K562 (cell line): ENCODE measurements at regions of chr12 and their contacts with region 1.

Region 1: DNA sequence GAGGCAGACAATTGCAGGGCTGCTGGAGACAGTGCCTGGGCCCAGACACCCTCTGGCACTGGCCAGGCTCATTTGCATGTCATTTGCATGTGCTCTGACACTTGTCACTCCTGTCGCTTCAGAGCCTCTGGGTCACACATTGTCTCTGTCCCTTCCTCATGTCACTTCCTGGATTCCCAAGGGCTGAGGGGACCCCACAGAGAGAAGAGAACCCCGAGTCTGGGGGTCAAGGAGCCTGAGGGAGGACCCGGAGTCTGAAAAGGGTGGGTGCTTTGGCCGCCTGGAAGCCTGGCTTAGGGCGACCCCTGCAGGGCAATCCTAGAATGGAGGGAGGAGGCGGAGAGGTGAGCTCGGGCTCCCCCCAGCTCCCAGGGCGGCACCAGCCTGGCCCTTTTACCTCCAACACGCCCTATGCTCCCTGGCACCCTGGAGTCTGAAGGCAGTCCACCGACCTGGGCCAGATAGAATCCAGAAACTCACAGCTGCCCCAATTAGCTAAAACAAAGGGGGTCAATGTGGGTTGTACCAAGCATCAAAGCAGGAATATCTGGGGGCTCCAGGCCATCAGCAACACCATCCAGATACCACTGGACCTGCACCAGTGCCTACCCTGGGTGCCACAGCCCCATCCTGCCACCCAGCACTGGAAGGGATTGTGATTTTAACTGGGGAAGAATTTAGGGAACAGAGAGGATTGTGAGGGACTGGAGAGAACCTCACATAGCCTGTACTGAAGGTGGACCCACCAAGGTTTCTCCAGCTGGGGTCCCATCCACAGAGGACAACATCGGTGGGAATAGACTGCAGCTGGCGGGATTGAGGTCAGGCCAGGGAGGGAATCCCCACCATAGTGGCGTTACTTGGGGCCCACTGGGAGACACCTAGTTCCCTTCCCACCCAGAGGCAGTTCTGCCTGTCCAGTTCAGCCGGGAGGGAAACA is 21.8 kb upstream of the KRT78 start:
- DNase-seq: peak; percentile 85 to 89 (median 87)
- ATAC-seq: peak; percentile 79
- H3K4me3 ChIP-seq: no peak overlapping the region
- H3K27ac ChIP-seq: no peak overlapping the region
- H3K4me1 ChIP-seq: peaks cover 25 to 36% of the 10 kb centered on the region in 2 experiments
- H3K27me3 ChIP-seq: no peaks in the 10 kb centered on the region
- CTCF ChIP-seq: peak; percentile 97 to 99 (median 99)
- EP300 ChIP-seq: no peak
- POLR2A ChIP-seq: no peak
- RAD21 ChIP-seq: peak; percentile 98 to 99

Region 2: DNA sequence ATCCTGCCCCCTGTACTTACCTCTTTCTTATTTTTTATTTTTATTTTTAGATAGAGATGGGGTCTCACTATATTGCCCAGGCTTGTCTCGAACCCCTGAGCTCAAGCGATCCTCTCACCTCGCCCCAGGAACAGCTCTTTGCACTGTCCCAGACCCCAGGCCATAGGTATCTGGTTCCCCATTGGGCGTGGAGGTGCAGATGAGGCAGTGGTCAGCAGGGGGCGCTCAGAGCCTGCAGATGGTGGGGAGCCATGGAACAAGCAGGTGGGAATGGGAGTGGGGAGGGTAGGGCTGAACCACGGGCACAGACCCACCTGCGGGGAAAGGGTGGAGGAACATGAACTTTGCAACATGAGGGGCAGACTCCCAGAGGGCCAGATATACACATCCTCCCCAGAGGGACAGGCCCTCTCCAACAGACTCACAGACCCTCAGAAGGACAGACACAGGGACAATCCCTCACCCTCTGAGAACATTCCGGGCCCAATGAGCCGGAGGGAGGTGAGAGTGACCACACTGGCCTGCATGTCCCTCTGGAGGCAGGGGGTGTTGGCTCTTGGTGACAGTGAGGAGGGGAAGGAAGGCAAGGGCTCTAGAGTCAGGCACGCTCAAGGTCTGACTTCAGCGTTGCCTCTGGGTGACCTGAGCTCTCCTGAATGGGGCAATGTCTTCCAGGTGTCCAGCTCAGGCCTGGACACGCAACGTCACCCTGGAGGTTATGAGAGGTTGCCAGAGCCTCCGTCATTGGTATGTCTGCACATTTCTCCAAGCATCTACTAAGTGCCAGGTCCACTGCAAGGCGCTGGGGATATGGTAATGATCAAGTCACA is 713.7 kb before region 1 on chr12:
- CTCF ChIA-PET with region 1: interaction called, 4 read pairs
- POLR2A ChIA-PET with region 1: no interaction called
- in situ Hi-C with region 1: no loop called
- intact Hi-C with region 1: loop called (anchors 5 kb)
- DNase-seq: peak; percentile 76 to 86 (median 82)
- ATAC-seq: peak; percentile 88
- H3K4me3 ChIP-seq: no peak overlapping the region
- H3K27ac ChIP-seq: no peak overlapping the region
- H3K4me1 ChIP-seq: peaks cover 0 to 6% of the 10 kb centered on the region in 2 experiments; a peak in 3 of 5 replicates
- H3K27me3 ChIP-seq: peaks cover 7 to 18% of the 10 kb centered on the region in 2 experiments; a peak in 4 of 5 replicates
- CTCF ChIP-seq: peak; percentile 90 to 96 (median 92)
- EP300 ChIP-seq: no peak
- POLR2A ChIP-seq: no peak
- RAD21 ChIP-seq: peak; percentile 81 to 90

Region 3: DNA sequence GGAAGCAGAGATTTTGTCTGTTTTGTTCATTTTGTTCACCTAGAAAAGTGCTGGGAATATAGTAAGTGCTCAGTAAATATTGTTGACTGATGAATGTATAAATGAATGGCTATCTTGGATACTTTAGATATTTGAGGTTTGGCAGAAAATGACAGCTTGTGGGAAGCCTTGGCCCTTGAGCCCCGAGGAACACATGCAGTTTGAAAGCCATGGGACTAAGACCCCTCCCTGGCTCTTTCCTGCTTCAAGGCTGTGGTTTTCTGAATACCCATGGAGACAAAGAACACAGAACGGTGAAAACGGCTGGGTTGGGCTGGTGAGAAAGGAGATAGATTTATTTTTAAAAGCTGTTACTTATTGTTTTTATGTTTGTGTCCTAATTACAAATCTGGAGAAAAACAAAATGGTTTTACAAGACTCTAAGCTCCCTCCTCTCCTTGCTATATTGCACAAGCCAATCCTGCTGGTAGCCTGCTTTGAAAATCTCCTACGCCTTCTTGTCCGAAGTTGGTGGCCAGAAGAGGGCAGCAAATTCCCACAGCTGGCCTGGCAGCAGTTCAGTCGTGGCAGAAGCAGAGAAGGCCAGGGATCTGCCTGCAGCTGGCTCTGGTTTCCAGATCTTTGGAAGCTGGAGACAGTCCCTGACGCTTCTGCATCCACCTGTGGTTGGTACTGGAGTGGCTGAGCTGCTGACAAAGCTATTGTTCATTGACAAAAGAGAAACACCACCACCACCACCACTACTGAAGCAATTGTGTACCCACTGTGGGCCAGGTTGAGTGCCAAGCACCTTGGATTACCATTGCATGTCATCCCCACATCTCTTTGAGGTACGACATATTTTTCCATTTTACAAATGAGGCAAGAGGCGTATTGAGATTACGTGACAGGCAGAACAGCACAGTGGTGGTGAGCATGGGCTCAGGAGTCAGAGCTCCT is 498.1 kb before region 1 on chr12:
- CTCF ChIA-PET with region 1: no interaction called
- POLR2A ChIA-PET with region 1: interaction called, 3 read pairs
- in situ Hi-C with region 1: no loop called
- intact Hi-C with region 1: loop called (anchors 5 kb)
- DNase-seq: peak; percentile 57 to 71 (median 66)
- ATAC-seq: peak; percentile 78
- H3K4me3 ChIP-seq: no peak overlapping the region
- H3K27ac ChIP-seq: no peak overlapping the region
- H3K4me1 ChIP-seq: no peaks in the 10 kb centered on the region
- H3K27me3 ChIP-seq: peaks cover 1 to 11% of the 10 kb centered on the region in 2 experiments; a peak in 4 of 5 replicates
- CTCF ChIP-seq: peak; percentile 61 to 81 (median 80)
- EP300 ChIP-seq: no peak
- POLR2A ChIP-seq: no peak
- RAD21 ChIP-seq: peak; percentile 72 to 80

Region 4: GRCh38 chr12:52667511-52667910 is 203.1 kb before region 1 on chr12:
- CTCF ChIA-PET with region 1: no interaction called
- POLR2A ChIA-PET with region 1: no interaction called
- in situ Hi-C with region 1: no loop called
- intact Hi-C with region 1: loop called (anchors 2 kb)
- DNase-seq: peak in 3 of 4 experiments; percentile 21 to 35 (median 35)
- ATAC-seq: peak; percentile 74
- H3K4me3 ChIP-seq: no peak overlapping the region
- H3K27ac ChIP-seq: no peak overlapping the region
- H3K4me1 ChIP-seq: peaks cover 13% of the 10 kb centered on the region in 2 experiments; a peak in 4 of 5 replicates
- H3K27me3 ChIP-seq: no peaks in the 10 kb centered on the region
- CTCF ChIP-seq: peak; percentile 47 to 70 (median 52); a peak in 5 of 6 replicates
- EP300 ChIP-seq: no peak
- POLR2A ChIP-seq: no peak
- RAD21 ChIP-seq: peak; percentile 68 to 69